ENCODE measurements at regions of chr7 and their contacts with region 1.

Region 1: GRCh38 chr7:129367700-129368388 is 66.4 kb upstream of the STRIP2 start:
- DNase-seq: peak; percentile 68
- H3K4me3 Mint-ChIP-seq: peak overlapping the region; percentile 73
- H3K27ac Mint-ChIP-seq: peak overlapping the region; percentile 88
- H3K4me1 Mint-ChIP-seq: peaks cover 58% of the 10 kb centered on the region
- H3K27me3 Mint-ChIP-seq: no peaks in the 10 kb centered on the region

Region 2: GRCh38 chr7:129009437-129009836 is 358.4 kb before region 1 on chr7:
- intact Hi-C with region 1: loop called (anchors 1 kb)
- DNase-seq: no peak
- H3K4me3 Mint-ChIP-seq: no peak overlapping the region
- H3K27ac Mint-ChIP-seq: peak overlapping the region; percentile 77
- H3K4me1 Mint-ChIP-seq: peaks cover 29% of the 10 kb centered on the region
- H3K27me3 Mint-ChIP-seq: no peaks in the 10 kb centered on the region

Region 3: DNA sequence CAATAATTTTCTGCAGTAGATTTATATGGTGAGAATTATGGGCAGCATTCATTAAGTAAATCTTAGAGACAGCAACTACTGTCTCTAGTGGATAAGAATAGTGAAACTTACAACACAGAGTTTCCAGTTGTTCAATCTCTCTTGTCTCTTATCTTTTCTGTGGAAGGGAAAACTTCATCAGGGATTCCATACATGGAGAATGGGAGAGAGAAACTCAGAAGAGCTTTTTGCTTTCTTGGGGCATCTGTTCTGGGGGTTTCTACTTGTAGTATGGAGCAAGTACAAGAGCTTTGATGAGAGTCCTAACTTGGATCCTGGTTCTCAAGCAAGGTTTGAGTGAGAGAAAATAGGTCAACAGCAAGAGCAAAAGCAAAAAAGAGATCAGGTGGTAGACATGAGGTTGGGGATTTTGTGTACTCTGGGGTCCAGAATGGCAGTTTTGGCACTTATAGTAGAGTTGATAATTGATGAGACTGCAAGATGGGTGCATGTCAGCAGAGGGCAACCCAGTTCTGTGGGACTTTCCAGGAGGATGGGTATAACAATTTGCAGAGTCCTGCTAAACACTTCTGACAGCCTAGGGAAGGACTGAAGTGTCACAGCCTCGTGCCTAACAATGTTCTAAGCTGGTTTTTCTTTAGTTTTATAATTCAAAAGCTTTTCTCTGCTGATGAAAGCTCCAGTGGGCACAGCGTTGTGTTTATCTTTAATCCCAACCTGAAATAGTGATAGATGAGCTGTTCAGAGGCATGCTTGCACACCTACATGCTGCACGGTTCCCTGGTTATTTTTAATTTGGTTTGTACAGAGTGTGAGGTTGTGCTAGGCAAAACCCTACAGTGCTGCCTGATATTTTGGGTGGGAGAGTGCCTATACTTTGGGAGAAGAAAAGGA is 34.4 kb after region 1 on chr7:
- intact Hi-C with region 1: loop called (anchors 1 kb)
- DNase-seq: peak; percentile 2
- H3K4me3 Mint-ChIP-seq: no peak overlapping the region
- H3K27ac Mint-ChIP-seq: peak overlapping the region; percentile 0
- H3K4me1 Mint-ChIP-seq: peaks cover 44% of the 10 kb centered on the region
- H3K27me3 Mint-ChIP-seq: no peaks in the 10 kb centered on the region

Region 4: GRCh38 chr7:129466796-129467195 is 99.0 kb after region 1 on chr7:
- intact Hi-C with region 1: no loop called
- DNase-seq: no peak
- H3K4me3 Mint-ChIP-seq: no peak overlapping the region
- H3K27ac Mint-ChIP-seq: no peak overlapping the region
- H3K4me1 Mint-ChIP-seq: peaks cover 30% of the 10 kb centered on the region
- H3K27me3 Mint-ChIP-seq: no peaks in the 10 kb centered on the region

Region 5: GRCh38 chr7:129530795-129531391 is 163.0 kb after region 1 on chr7:
- intact Hi-C with region 1: loop called (anchors 2 kb)
- DNase-seq: peak; percentile 8
- H3K4me3 Mint-ChIP-seq: no peak overlapping the region
- H3K27ac Mint-ChIP-seq: peak overlapping the region; percentile 79
- H3K4me1 Mint-ChIP-seq: peaks cover 12% of the 10 kb centered on the region
- H3K27me3 Mint-ChIP-seq: no peaks in the 10 kb centered on the region

Region 6: GRCh38 chr7:129635300-129636029 is 267.6 kb after region 1 on chr7:
- intact Hi-C with region 1: loop called (anchors 1 kb)
- DNase-seq: peak; percentile 51
- H3K4me3 Mint-ChIP-seq: no peak overlapping the region
- H3K27ac Mint-ChIP-seq: no peak overlapping the region
- H3K4me1 Mint-ChIP-seq: peaks cover 23% of the 10 kb centered on the region
- H3K27me3 Mint-ChIP-seq: no peaks in the 10 kb centered on the region

Region 7: DNA sequence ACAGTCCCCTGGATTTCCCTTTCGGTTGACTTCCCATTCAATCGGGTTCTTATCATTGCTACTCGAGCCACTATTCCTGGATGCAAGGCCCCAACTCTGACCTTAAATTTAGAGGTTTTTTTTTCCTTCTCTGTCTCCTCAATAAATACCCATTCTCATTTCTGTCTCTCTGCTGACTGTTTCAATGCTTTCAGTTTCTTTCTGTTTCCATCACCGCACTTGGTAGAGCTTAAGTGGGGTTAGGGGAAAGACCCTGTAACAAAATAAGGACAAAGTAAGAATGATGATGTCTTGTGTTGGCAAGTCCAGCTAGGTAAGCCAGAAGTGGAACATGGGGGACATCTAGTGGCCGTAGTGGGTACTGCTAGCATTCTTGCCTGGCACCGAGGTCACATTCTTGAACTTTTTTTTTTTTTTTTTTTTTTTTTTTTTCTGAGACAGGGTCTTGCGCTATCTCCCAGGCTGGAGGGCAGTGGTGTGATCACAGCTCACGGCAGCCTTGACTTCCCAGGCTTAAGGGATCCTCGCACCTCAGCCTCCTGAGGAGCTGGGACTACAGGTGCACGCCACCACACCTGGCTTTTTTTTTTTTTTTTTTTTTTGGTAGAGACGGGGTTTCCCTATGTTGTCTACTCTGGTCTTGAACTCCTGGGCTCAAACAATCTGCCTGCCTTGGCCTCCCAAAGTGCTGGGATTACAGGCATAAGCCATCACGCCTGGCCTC is 643.0 kb after region 1 on chr7:
- intact Hi-C with region 1: loop called (anchors 10 kb)
- DNase-seq: peak; percentile 76
- H3K4me3 Mint-ChIP-seq: no peak overlapping the region
- H3K27ac Mint-ChIP-seq: peak overlapping the region; percentile 75
- H3K4me1 Mint-ChIP-seq: peaks cover 5% of the 10 kb centered on the region
- H3K27me3 Mint-ChIP-seq: no peaks in the 10 kb centered on the region

Measured in activated T-helper 1 cell treated with anti-CD3 and anti-CD28 coated beads, Interleukin-12 subunit alpha, Interleukin-12 subunit beta, Interleukin-2, Interleukin-4 antibody, amounts not matched to agents 30 ng/mL and 10 ng/mL and 1 ng/mL, durations not matched to agents 14 hours and 24 hours and 36 hours (primary cell).